ENCODE measurements at regions of chr16 and their contacts with region 1.

Region 1: DNA sequence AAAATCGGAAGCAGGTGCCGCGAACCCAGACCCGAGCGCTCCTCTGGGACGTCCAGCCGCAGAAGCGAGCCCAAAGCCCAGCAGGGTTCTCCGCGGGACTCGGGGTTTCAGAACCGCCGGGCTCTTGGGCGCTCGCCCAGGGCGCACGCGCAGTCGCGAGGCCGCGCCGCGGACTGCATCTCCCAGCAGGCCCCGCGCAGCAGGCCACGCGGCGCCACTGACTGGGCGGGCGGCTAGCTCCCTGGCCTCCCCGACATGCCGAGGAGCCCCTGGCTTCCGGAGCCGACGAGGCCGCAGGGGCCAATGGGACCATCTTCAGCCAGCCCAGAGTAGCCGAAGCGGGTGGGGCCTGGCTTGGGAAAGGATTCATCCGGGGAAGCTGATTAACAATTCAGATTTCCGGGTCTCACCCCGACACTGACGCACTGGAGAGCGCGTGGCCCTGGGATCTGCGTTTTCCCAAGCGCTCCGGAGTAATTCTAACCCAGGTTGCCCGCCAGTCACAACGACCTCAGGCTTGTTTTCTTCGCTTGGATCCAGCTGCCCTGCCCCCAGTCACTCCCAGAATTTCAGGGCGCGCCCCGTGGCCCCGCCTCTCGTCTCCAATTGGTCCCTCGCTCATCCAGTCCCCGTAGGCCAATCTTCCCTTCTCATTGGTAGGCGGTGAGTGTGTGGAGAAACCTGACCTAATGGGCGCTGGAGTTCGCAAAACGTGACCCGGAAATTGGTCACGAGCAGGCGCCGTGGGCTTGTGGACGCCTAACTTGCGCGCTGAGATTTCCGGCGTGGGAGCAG is at the start of gene ZNF263:
- DNase-seq: peak; percentile 92 to 97 (median 95)
- H3K4me3 ChIP-seq: peak within 1 kb of the TSS; percentile 66 to 68
- H3K4me3 Mint-ChIP-seq: peak within 1 kb of the TSS; percentile 93 to 97 (median 95)
- H3K27ac ChIP-seq: peak within 1 kb of the TSS; percentile 87
- H3K27ac Mint-ChIP-seq: peak within 1 kb of the TSS; percentile 93 to 99 (median 98)
- H3K4me1 ChIP-seq: peaks cover 27% of the 10 kb centered on the region
- H3K4me1 Mint-ChIP-seq: peaks cover 18 to 45% (median 30%) of the 10 kb centered on the region in 4 donors
- H3K27me3 ChIP-seq: no peaks in the 10 kb centered on the region
- H3K27me3 Mint-ChIP-seq: no peaks in the 10 kb centered on the region
- total RNA-seq, gene ZNF263: 44.0 to 45.1 TPM

Region 2: DNA sequence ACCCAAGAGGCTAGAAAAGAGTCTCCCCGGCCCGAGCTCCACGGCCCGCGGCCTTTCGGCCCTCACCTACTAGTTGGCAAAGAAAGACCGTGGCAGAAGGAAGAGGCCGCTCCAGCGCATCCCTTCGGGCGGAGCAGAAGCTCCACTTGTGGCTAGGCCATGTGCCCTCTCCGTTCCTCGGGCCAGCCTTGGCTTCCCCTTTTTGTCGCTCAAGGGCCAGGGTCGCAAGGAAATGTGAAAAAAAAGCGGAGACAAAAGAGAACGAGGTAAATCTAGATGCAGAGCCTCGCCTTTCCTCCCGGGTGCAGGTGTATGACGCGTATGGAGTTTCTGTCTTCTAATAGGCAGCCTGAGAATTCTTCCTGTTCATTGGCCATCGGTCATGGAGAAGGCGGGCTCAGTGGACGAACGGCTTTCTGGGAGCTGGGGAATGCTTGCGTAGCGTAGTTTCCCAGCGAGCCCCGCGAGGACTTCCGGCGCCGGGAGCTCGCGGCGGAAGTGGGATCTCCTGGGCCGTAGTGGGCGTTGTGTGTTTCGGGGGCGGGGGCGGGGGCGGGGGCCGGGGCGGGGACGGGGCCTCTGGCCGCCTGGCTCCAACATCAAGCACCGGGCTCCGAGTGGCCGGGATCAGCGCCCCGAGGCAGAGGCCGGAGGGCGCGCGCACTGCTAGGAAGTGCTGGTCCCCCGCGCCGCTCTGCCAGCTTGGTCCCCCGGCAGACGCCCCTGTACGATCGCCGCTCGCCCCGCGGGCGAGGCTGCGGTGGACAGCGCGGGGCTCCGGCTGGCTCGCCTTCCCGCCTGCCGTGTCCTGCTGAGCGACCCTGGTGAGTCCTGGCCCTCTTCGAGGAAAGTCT is 148.1 kb before region 1 on chr16 and contains the start of gene ZNF213:
- CTCF ChIA-PET with region 1: interaction called, 3 read pairs
- POLR2A ChIA-PET with region 1: interaction called, 17 read pairs
- intact Hi-C with region 1: loop called (anchors 1 kb)
- DNase-seq: peak; percentile 92 to 98 (median 96)
- H3K4me3 ChIP-seq: peak within 1 kb of the TSS; percentile 89 to 97
- H3K4me3 Mint-ChIP-seq: peak within 1 kb of the TSS; percentile 93 to 99 (median 98)
- H3K27ac ChIP-seq: peak within 1 kb of the TSS; percentile 93
- H3K27ac Mint-ChIP-seq: peak within 1 kb of the TSS; percentile 94 to 99 (median 99)
- H3K4me1 ChIP-seq: peaks cover 28% of the 10 kb centered on the region
- H3K4me1 Mint-ChIP-seq: peaks cover 12 to 44% (median 23%) of the 10 kb centered on the region in 4 donors
- H3K27me3 ChIP-seq: no peaks in the 10 kb centered on the region
- H3K27me3 Mint-ChIP-seq: no peaks in the 10 kb centered on the region
- total RNA-seq, gene ZNF213: 14.1 to 14.5 TPM

Region 3: GRCh38 chr16:3173892-3174617 is 108.9 kb before region 1 on chr16:
- CTCF ChIA-PET with region 1: no interaction called
- POLR2A ChIA-PET with region 1: interaction called, 22 read pairs
- intact Hi-C with region 1: no loop called
- DNase-seq: no peak
- H3K4me3 ChIP-seq: no peak overlapping the region
- H3K4me3 Mint-ChIP-seq: peak overlapping the region in 7 of 8 donors; percentile 4 to 58 (median 35)
- H3K27ac ChIP-seq: no peak overlapping the region
- H3K27ac Mint-ChIP-seq: peak overlapping the region in 2 of 7 donors; percentile 17 to 75
- H3K4me1 ChIP-seq: peaks cover 48% of the 10 kb centered on the region
- H3K4me1 Mint-ChIP-seq: peaks cover 18 to 46% (median 35%) of the 10 kb centered on the region in 4 donors
- H3K27me3 ChIP-seq: peaks cover 38% of the 10 kb centered on the region
- H3K27me3 Mint-ChIP-seq: peaks cover 39 to 41% of the 10 kb centered on the region in 2 donors

Region 4: DNA sequence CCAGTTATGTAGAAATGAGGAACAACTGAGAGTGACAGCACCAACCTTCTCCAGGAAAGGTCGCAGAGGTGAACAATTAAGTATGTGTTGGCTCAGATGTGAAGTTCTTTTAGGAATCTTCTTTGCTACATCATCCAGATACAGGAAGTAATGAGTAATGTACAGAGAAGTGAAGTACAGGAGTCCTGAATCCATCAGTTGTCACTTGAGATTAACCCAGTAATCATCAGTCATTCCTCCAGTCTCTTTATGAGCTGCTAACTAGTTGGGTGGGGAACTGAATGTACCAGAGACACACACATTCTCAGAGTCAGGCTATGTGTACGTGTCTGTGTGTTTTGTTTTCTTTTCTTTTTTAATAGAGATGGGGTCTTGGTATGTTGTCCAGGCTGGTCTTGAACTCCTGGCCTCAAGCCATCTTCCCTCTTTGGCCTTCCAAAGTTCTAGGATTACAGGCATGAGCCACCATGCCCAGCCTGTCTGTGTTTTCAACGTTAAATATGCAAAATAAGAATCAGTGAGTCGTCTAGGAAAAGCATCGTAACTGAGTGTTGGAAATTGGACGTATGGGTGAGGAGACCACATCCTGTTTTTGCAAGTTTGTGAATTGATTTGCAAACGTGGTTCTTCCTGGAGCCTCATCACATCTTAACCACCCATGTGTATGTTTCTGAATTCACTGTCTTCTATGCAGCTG is 67.9 kb before region 1 on chr16:
- CTCF ChIA-PET with region 1: no interaction called
- POLR2A ChIA-PET with region 1: interaction called, 17 read pairs
- intact Hi-C with region 1: loop called (anchors 1 kb)
- DNase-seq: peak; percentile 75 to 86 (median 83)
- H3K4me3 ChIP-seq: peak overlapping the region in 1 of 2 donors; percentile 37
- H3K4me3 Mint-ChIP-seq: peak overlapping the region; percentile 56 to 84 (median 81)
- H3K27ac ChIP-seq: peak overlapping the region; percentile 50
- H3K27ac Mint-ChIP-seq: peak overlapping the region; percentile 95 to 100 (median 97)
- H3K4me1 ChIP-seq: peaks cover 34% of the 10 kb centered on the region
- H3K4me1 Mint-ChIP-seq: peaks cover 30 to 41% (median 35%) of the 10 kb centered on the region in 4 donors
- H3K27me3 ChIP-seq: no peaks in the 10 kb centered on the region
- H3K27me3 Mint-ChIP-seq: no peaks in the 10 kb centered on the region

Region 5: DNA sequence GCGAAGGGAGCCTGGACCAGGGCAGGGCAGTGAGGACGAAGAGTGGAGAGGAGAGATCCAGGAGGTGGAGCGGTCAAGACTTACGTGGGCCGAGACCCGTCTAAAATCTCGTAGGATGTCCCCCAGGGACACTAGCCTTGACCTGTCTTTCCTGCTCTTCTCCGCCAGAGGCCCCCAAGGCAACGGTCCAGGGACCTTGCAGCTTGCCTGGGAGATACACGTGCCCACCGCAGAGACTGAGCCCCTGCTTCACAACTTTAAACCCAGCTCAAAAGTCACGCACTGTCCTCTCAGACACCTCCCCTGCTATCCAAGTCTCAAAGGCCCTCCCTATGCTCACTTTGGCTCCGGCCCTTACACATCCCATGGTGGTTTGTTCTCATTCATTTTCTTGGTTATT is 12.9 kb after region 1 on chr16:
- CTCF ChIA-PET with region 1: no interaction called
- POLR2A ChIA-PET with region 1: interaction called, 12 read pairs
- intact Hi-C with region 1: no loop called
- DNase-seq: no peak
- H3K4me3 ChIP-seq: no peak overlapping the region
- H3K4me3 Mint-ChIP-seq: no peak overlapping the region
- H3K27ac ChIP-seq: no peak overlapping the region
- H3K27ac Mint-ChIP-seq: peak overlapping the region in 1 of 7 donors; percentile 69
- H3K4me1 ChIP-seq: no peaks in the 10 kb centered on the region
- H3K4me1 Mint-ChIP-seq: peaks cover 0 to 5% (median under 1%) of the 10 kb centered on the region in 4 donors
- H3K27me3 ChIP-seq: no peaks in the 10 kb centered on the region
- H3K27me3 Mint-ChIP-seq: no peaks in the 10 kb centered on the region

Region 6: DNA sequence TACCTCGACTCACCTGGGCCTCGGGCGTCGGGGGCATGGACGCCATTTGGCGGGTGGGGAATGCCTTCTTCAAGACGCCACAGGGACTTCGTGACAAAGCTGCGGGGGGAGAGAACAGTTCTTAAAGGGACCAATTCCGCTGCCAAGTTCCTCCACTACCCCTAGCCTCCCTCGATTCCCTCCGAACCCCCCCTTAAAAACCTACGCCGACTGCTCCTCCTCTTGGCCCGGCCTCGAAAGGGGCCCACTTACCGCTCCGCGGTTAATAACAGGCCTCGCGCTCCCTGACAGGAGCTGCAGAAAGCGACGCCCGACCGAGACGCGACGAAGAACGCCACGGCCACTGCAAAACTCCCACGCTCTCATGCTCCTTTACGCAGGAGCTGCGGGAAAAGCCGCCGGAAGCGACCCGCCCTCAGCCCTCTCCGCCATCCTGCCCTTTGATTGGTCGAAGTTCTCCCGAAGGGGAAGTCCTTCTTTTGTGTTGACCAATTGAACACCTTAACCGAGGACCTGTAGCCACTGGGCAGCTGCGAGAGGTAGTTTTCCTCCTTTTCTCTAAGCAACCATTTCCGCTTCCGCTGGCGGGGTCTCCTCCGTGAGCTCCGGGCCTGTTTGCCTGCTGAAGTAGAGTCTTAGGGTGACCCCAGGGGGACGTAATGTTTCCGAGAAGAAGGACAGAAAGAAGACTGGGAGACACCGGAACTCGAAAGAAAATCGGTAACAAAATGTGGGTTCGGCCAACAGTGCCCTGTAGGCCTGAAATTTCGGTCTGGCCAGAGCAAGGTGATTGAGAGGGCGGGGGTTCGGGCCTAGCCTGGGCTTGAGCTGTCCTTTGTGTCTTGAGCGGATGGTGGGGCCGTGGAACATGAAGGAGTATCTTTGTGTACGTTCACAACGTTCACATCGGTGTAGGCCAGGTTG is 160.4 kb after region 1 on chr16 and contains the starts of genes NAA60 and ZNF597:
- CTCF ChIA-PET with region 1: no interaction called
- POLR2A ChIA-PET with region 1: interaction called, 16 read pairs
- intact Hi-C with region 1: no loop called
- DNase-seq: peak; percentile 80 to 88 (median 82)
- H3K4me3 ChIP-seq: peak within 1 kb of the TSS; percentile 66 to 67
- H3K4me3 Mint-ChIP-seq: peak within 1 kb of the TSS; percentile 96 to 99 (median 96)
- H3K27ac ChIP-seq: peak within 1 kb of the TSS; percentile 80
- H3K27ac Mint-ChIP-seq: peak within 1 kb of the TSS; percentile 88 to 99 (median 97)
- H3K4me1 ChIP-seq: peaks cover 24% of the 10 kb centered on the region
- H3K4me1 Mint-ChIP-seq: peaks cover 8 to 39% (median 23%) of the 10 kb centered on the region in 4 donors
- H3K27me3 ChIP-seq: no peaks in the 10 kb centered on the region
- H3K27me3 Mint-ChIP-seq: no peaks in the 10 kb centered on the region
- total RNA-seq, gene NAA60: 58.1 to 62.9 TPM
- total RNA-seq, gene ZNF597: 5.3 TPM

Region 7: DNA sequence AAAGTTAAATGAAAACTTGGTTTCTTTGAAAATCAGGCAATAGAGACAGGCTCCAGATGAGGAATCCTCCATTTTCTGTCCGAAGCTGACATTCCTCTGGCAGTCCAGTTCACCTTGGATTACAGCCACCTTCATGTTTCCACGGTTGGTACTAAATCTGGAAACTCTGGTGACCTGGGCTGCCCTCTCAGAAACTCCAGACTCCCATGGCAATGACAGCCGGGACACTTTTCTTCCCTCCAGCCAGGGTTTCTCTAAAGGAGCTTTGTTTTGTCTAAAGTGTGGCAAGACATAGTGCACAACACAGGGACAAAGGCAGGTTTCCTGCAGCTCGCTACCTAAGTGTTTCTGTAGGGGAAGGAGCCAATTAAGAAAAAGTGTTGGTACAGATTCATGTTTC is 253.9 kb after region 1 on chr16:
- CTCF ChIA-PET with region 1: no interaction called
- POLR2A ChIA-PET with region 1: no interaction called
- intact Hi-C with region 1: no loop called
- DNase-seq: no peak
- H3K4me3 ChIP-seq: no peak overlapping the region
- H3K4me3 Mint-ChIP-seq: no peak overlapping the region
- H3K27ac ChIP-seq: no peak overlapping the region
- H3K27ac Mint-ChIP-seq: peak overlapping the region in 4 of 7 donors; percentile 22 to 42 (median 28)
- H3K4me1 ChIP-seq: no peaks in the 10 kb centered on the region
- H3K4me1 Mint-ChIP-seq: peaks cover 2 to 14% (median 6%) of the 10 kb centered on the region in 4 donors
- H3K27me3 ChIP-seq: no peaks in the 10 kb centered on the region
- H3K27me3 Mint-ChIP-seq: no peaks in the 10 kb centered on the region

Measured in CD4-positive, alpha-beta memory T cell (primary cell).